ENCODE measurements at regions of chr1 and their contacts with region 1.

Region 1: GRCh38 chr1:84541679-84542078 is 32.6 kb downstream of the CTBS start:
- DNase-seq: no peak
- H3K4me3 ChIP-seq: no peak overlapping the region
- H3K4me3 Mint-ChIP-seq: no peak overlapping the region
- H3K27ac Mint-ChIP-seq: no peak overlapping the region
- H3K4me1 ChIP-seq: no peaks in the 10 kb centered on the region
- H3K4me1 Mint-ChIP-seq: no peaks in the 10 kb centered on the region
- H3K27me3 ChIP-seq: no peaks in the 10 kb centered on the region
- H3K27me3 Mint-ChIP-seq: no peaks in the 10 kb centered on the region
- CTCF ChIP-seq: peak in 1 of 2 experiments; percentile 2

Region 2: GRCh38 chr1:84442256-84442655 is 99.4 kb before region 1 on chr1:
- CTCF ChIA-PET with region 1: no interaction called
- POLR2A ChIA-PET with region 1: no interaction called
- intact Hi-C with region 1: loop called (anchors 5 kb)
- DNase-seq: peak in 1 of 2 experiments; percentile 1
- H3K4me3 ChIP-seq: no peak overlapping the region
- H3K4me3 Mint-ChIP-seq: no peak overlapping the region
- H3K27ac Mint-ChIP-seq: no peak overlapping the region
- H3K4me1 ChIP-seq: no peaks in the 10 kb centered on the region
- H3K4me1 Mint-ChIP-seq: no peaks in the 10 kb centered on the region
- H3K27me3 ChIP-seq: no peaks in the 10 kb centered on the region
- H3K27me3 Mint-ChIP-seq: peaks cover 5% of the 10 kb centered on the region
- CTCF ChIP-seq: peak in 1 of 2 experiments; percentile 13

Measured in Caco-2 (cell line).